Left ventricle myocardium superior (tissue), 1 donor: ENCODE measurements at regions of chr14 and their contacts with region 1.

Region 1: GRCh38 chr14:60349663-60350365 is 100.8 kb downstream of the PPM1A start:
- DNase-seq: no peak
- ATAC-seq: peak; percentile 64

Region 2: GRCh38 chr14:60495946-60496345 is 146.1 kb after region 1 on chr14:
- intact Hi-C with region 1: no loop called
- DNase-seq: no peak
- ATAC-seq: no peak

Region 3: DNA sequence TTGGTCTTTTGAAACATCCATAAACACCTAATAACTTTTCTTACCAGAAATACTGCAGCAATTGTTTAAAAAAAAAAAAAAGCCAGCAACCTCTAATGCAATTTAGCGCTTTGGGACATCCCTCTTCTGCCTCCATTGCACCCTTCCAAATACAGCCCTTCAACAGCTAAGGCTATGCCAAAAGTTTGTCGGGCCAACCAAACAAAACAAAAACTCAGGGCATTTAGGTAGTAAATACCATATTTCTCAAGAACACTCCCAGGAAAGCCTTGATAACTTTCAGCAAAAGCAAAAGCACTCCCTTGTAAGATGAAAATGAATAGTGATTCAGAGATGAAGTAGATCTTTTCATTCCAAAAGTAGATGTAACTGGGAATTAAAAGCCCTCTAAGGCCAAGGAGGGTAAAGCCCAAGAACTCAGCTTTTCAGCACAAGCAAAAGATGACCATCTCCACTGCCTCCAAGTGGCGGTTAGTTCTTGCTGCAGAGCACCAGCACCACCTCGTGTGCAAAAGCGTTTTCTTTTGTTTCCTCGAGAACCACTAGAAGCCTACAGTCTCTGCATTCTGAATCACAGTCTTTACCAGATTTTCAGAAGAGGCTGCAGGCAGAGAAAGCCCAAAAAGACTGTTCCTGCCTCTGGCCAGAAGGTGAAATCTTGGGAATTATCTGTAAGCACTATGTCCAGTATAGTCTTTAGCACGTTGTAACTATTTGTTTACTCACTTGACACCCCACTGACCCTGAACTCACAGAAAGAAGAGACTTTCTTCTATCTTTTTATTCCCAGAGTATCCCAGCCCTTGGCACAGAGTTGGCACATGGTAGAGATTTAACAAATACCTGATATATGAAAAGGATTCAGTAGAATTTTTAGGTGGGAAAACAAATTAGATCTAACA is 212.3 kb after region 1 on chr14:
- intact Hi-C with region 1: loop called (anchors 5 kb)
- DNase-seq: peak; percentile 39
- ATAC-seq: peak; percentile 91